Caco-2 (cell line): ENCODE measurements at regions of chr2 and their contacts with region 1.

Region 1: DNA sequence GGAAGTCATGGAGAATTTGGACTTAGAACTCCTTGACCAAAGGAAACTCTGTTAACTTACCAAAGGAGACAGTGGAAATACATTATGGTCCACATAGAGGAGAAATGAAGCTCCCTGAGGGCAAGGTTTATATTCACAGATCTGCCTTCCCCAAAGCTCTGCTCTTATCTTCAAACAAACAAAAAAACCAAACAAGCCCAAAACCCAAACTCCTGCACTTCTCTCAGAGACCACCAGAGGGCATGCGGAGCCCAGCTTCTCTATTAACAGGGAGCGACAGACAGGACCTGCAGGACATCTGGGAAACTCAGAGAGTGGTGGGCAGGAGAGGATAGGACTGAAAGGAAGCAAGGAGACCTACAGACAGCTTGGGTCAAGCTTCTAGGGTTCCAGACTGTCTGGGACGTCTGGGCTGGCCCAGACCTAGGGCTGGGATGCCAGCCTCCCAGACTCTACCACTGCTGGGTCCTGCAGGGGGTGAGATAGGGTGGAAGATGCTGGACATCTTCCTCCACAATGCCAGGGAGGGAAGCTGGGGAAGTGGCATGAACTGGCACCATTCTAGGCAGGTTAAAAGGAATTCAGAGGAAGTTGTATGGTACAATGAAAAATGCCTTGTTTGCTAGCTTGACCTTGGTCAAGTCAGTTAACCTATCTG is 4.0 kb upstream of the WNT10A start:
- DNase-seq: peak; percentile 83 to 87
- H3K4me3 ChIP-seq: no peak overlapping the region
- H3K4me3 Mint-ChIP-seq: no peak overlapping the region
- H3K27ac Mint-ChIP-seq: no peak overlapping the region
- H3K4me1 ChIP-seq: peaks cover 17% of the 10 kb centered on the region
- H3K4me1 Mint-ChIP-seq: no peaks in the 10 kb centered on the region
- H3K27me3 ChIP-seq: no peaks in the 10 kb centered on the region
- H3K27me3 Mint-ChIP-seq: no peaks in the 10 kb centered on the region
- CTCF ChIP-seq: peak; percentile 94 to 97

Region 2: GRCh38 chr2:218860950-218861381 is 15.7 kb before region 1 on chr2:
- CTCF ChIA-PET with region 1: interaction called, 16 read pairs
- POLR2A ChIA-PET with region 1: no interaction called
- intact Hi-C with region 1: loop called (anchors 2 kb)
- DNase-seq: peak; percentile 88 to 93
- H3K4me3 ChIP-seq: peak overlapping the region; percentile 43
- H3K4me3 Mint-ChIP-seq: peak overlapping the region; percentile 76
- H3K27ac Mint-ChIP-seq: no peak overlapping the region
- H3K4me1 ChIP-seq: peaks cover 43% of the 10 kb centered on the region
- H3K4me1 Mint-ChIP-seq: peaks cover 32% of the 10 kb centered on the region
- H3K27me3 ChIP-seq: peaks cover 6% of the 10 kb centered on the region
- H3K27me3 Mint-ChIP-seq: peaks cover 8% of the 10 kb centered on the region
- CTCF ChIP-seq: no peak

Region 3: DNA sequence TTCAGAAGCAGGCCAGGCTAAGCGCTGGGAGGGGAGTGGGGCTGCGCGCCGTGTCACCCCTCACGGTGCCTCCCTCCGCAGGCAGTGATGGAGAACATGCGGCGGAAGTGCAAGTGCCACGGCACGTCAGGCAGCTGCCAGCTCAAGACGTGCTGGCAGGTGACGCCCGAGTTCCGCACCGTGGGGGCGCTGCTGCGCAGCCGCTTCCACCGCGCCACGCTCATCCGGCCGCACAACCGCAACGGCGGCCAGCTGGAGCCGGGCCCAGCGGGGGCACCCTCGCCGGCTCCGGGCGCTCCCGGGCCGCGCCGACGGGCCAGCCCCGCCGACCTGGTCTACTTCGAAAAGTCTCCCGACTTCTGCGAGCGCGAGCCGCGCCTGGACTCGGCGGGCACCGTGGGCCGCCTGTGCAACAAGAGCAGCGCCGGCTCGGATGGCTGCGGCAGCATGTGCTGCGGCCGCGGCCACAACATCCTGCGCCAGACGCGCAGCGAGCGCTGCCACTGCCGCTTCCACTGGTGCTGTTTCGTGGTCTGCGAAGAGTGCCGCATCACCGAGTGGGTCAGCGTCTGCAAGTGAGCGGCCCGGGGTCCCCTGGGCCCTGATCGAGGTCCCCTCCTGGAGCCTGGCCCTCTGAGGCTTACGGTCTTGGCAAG is 16.1 kb after region 1 on chr2:
- CTCF ChIA-PET with region 1: interaction called, 152 read pairs
- POLR2A ChIA-PET with region 1: interaction called, 8 read pairs
- intact Hi-C with region 1: loop called (anchors 1 kb)
- DNase-seq: peak; percentile 69 to 83
- H3K4me3 ChIP-seq: peak overlapping the region; percentile 38
- H3K4me3 Mint-ChIP-seq: peak overlapping the region; percentile 66
- H3K27ac Mint-ChIP-seq: no peak overlapping the region
- H3K4me1 ChIP-seq: peaks cover 41% of the 10 kb centered on the region
- H3K4me1 Mint-ChIP-seq: peaks cover 35% of the 10 kb centered on the region
- H3K27me3 ChIP-seq: no peaks in the 10 kb centered on the region
- H3K27me3 Mint-ChIP-seq: no peaks in the 10 kb centered on the region
- CTCF ChIP-seq: peak; percentile 52 to 81

Region 4: DNA sequence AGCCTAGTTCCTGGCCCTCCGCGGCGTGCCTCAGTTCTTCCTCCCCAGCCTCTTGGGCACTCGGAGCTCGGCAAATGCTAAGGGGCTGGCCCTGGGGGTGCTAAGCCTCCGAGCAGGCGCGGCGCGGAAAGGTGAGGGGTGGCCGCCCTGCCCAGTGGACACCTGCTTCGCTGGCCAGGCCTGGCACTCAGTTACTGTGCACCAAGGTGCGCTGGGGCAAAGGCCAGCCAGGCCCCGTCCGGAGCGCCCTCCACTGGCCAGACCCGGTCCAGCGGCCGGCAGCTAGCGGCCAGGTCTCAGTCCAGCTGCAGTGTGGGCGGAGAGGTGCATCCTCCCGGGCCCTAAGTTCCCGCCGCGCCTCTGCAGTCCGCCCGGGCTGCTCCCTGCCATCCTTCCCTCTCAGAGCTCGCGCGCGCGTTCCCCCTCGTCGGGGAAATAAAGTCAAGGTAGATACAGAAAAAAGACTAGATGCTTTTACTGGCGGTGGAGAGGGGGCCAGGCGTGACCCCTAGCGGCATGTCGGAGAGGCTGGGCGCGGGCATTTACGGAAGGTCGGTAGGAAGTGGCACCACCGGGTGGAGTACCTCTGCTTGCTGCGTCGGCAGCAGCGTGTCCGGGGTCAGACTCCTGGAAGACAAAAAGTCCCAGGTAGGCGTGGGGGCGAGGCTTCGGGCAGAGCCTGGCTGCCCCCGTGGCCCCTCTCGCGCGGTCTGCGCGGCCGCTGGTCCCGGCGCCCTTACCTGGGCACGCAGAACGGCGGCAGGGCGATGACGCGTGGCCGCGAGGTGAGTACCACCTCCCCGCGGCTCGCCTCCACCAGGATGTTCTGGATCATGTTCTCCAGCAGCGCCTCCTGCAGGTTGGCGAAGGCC is 125.9 kb after region 1 on chr2:
- CTCF ChIA-PET with region 1: interaction called, 10 read pairs
- POLR2A ChIA-PET with region 1: interaction called, 9 read pairs
- intact Hi-C with region 1: no loop called
- DNase-seq: peak in 1 of 2 experiments; percentile 85
- H3K4me3 ChIP-seq: peak overlapping the region; percentile 67
- H3K4me3 Mint-ChIP-seq: peak overlapping the region; percentile 79
- H3K27ac Mint-ChIP-seq: no peak overlapping the region
- H3K4me1 ChIP-seq: peaks cover 25% of the 10 kb centered on the region
- H3K4me1 Mint-ChIP-seq: peaks cover 15% of the 10 kb centered on the region
- H3K27me3 ChIP-seq: no peaks in the 10 kb centered on the region
- H3K27me3 Mint-ChIP-seq: peaks cover 7% of the 10 kb centered on the region
- CTCF ChIP-seq: peak; percentile 48 to 77